ENCODE measurements at regions of chr6 and their contacts with region 1.

Region 1: DNA sequence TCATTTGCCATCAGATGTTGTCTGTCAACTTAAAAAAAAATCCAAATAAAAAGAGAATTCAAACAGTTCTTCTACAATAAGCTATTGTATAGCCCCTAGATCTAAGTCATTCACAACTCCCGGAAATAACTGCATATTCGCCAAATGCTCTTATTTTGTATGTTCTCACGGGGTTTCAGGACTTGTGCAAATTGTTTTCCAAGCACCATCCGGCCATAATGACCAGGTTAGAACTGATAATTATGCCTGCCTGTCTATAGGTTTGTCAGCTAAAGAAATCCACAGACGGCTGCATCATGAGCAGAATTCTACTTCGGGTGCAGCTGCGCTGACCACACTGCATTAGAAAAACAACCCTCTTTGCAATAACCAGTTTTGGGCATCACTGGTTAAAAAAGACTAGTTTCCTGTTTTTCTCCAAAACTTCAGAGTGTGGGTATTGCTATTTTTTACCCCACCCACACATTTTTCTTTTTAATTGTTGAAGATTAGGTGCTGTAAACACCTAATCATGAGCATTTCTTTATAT is 87.7 kb downstream of the HIVEP2 start:
- DNase-seq: peak in 1 of 2 donors; percentile 64
- ATAC-seq: peak; percentile 22 to 40 (median 29)
- H3K4me3 ChIP-seq: peak overlapping the region; percentile 24
- H3K4me3 Mint-ChIP-seq: peak overlapping the region; percentile 89
- H3K27ac ChIP-seq: peak overlapping the region; percentile 65
- H3K27ac Mint-ChIP-seq: peak overlapping the region; percentile 78 to 92
- H3K4me1 ChIP-seq: peaks cover 39% of the 10 kb centered on the region
- H3K4me1 Mint-ChIP-seq: peaks cover 39 to 43% of the 10 kb centered on the region in 2 donors
- H3K27me3 ChIP-seq: no peaks in the 10 kb centered on the region
- H3K27me3 Mint-ChIP-seq: no peaks in the 10 kb centered on the region
- CTCF ChIP-seq: no peak

Region 2: GRCh38 chr6:142808378-142809061 is 48.8 kb before region 1 on chr6:
- intact Hi-C with region 1: no loop called
- DNase-seq: no peak
- ATAC-seq: no peak
- H3K4me3 ChIP-seq: no peak overlapping the region
- H3K4me3 Mint-ChIP-seq: no peak overlapping the region
- H3K27ac ChIP-seq: no peak overlapping the region
- H3K27ac Mint-ChIP-seq: no peak overlapping the region
- H3K4me1 ChIP-seq: no peaks in the 10 kb centered on the region
- H3K4me1 Mint-ChIP-seq: peaks cover 8 to 19% of the 10 kb centered on the region in 2 donors
- H3K27me3 ChIP-seq: no peaks in the 10 kb centered on the region
- H3K27me3 Mint-ChIP-seq: no peaks in the 10 kb centered on the region
- CTCF ChIP-seq: no peak

Region 3: GRCh38 chr6:142819603-142820337 is 37.5 kb before region 1 on chr6:
- intact Hi-C with region 1: loop called (anchors 5 kb)
- DNase-seq: peak in 1 of 2 donors; percentile 80
- ATAC-seq: peak; percentile 82 to 90 (median 83)
- H3K4me3 ChIP-seq: peak overlapping the region; percentile 31
- H3K4me3 Mint-ChIP-seq: peak overlapping the region; percentile 95
- H3K27ac ChIP-seq: peak overlapping the region; percentile 78
- H3K27ac Mint-ChIP-seq: peak overlapping the region; percentile 92 to 97
- H3K4me1 ChIP-seq: peaks cover 14% of the 10 kb centered on the region
- H3K4me1 Mint-ChIP-seq: peaks cover 27 to 52% of the 10 kb centered on the region in 2 donors
- H3K27me3 ChIP-seq: no peaks in the 10 kb centered on the region
- H3K27me3 Mint-ChIP-seq: no peaks in the 10 kb centered on the region
- CTCF ChIP-seq: no peak

Region 4: GRCh38 chr6:142842418-142843261 is 14.7 kb before region 1 on chr6:
- intact Hi-C with region 1: loop called (anchors 2 kb)
- DNase-seq: peak in 1 of 2 donors; percentile 84
- ATAC-seq: peak; percentile 60 to 79 (median 69)
- H3K4me3 ChIP-seq: peak overlapping the region; percentile 17
- H3K4me3 Mint-ChIP-seq: peak overlapping the region; percentile 84
- H3K27ac ChIP-seq: peak overlapping the region; percentile 63
- H3K27ac Mint-ChIP-seq: peak overlapping the region; percentile 93
- H3K4me1 ChIP-seq: peaks cover 21% of the 10 kb centered on the region
- H3K4me1 Mint-ChIP-seq: peaks cover 44 to 50% of the 10 kb centered on the region in 2 donors
- H3K27me3 ChIP-seq: no peaks in the 10 kb centered on the region
- H3K27me3 Mint-ChIP-seq: no peaks in the 10 kb centered on the region
- CTCF ChIP-seq: no peak

Region 5: DNA sequence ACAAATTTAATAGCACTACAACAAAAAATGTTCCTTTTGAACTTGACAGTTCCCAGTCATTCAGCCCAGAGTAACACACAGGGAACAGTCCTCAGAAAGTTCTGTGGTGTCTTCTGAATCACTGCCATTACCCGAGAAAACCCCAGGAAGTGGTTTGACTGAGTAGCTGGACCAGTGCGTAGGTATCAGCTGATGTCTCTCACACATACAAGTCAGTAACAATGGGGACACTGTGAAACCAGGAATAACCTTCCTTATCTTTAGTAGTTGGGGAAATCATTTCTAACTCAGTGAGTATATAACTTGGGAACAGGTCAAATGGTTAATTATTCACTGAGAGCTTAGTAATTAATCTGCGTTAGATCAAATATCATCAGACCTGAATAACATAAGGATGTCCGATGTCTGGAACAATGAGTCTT is 14.6 kb after region 1 on chr6:
- intact Hi-C with region 1: loop called (anchors 2 kb)
- DNase-seq: peak; percentile 34 to 87
- ATAC-seq: peak; percentile 74 to 93 (median 84)
- H3K4me3 ChIP-seq: no peak overlapping the region
- H3K4me3 Mint-ChIP-seq: peak overlapping the region; percentile 35
- H3K27ac ChIP-seq: peak overlapping the region; percentile 28
- H3K27ac Mint-ChIP-seq: peak overlapping the region; percentile 74 to 83
- H3K4me1 ChIP-seq: peaks cover 7% of the 10 kb centered on the region
- H3K4me1 Mint-ChIP-seq: peaks cover 55 to 57% of the 10 kb centered on the region in 2 donors
- H3K27me3 ChIP-seq: no peaks in the 10 kb centered on the region
- H3K27me3 Mint-ChIP-seq: no peaks in the 10 kb centered on the region
- CTCF ChIP-seq: no peak

Region 6: DNA sequence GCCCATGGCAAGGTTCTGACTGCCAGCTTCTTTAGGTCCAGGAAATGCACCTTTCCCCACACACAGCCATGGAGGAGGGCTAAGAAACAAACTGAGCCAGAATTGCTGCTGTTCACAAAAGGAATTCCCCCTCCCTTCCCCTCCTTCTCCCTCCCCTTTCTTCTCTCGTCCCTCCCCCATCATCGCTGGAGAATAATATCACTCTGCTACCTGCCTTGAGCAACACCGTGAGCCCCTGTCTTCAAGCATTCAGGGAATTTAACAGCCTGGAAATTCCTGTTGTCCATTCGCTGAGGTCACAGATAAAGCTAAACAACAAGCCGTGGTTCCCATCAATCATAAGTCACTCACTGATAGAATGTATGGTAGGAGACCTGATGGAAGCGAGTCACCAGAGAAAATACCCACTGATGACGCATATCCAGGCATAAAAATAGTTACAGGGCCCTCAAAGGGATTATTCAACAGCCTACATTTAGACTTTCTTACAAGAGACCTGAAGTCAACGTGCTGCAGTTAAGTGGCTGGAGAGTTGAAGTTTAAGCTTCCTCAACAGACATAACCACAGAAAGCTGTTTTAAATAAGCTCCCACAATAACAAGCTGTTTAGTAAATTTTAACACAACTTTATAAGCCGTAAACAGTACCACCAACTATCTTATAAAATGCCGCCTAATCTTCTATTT is 28.0 kb after region 1 on chr6:
- intact Hi-C with region 1: loop called (anchors 2 kb)
- DNase-seq: peak; percentile 30 to 91
- ATAC-seq: peak; percentile 83 to 89 (median 84)
- H3K4me3 ChIP-seq: peak overlapping the region; percentile 5
- H3K4me3 Mint-ChIP-seq: peak overlapping the region; percentile 65
- H3K27ac ChIP-seq: peak overlapping the region; percentile 64
- H3K27ac Mint-ChIP-seq: peak overlapping the region; percentile 84 to 92
- H3K4me1 ChIP-seq: peaks cover 7% of the 10 kb centered on the region
- H3K4me1 Mint-ChIP-seq: peaks cover 37 to 48% of the 10 kb centered on the region in 2 donors
- H3K27me3 ChIP-seq: no peaks in the 10 kb centered on the region
- H3K27me3 Mint-ChIP-seq: no peaks in the 10 kb centered on the region
- CTCF ChIP-seq: no peak

Region 7: GRCh38 chr6:142902636-142903053 is 45.3 kb after region 1 on chr6:
- intact Hi-C with region 1: loop called (anchors 5 kb)
- DNase-seq: peak; percentile 80 to 93
- ATAC-seq: peak; percentile 89 to 98 (median 90)
- H3K4me3 ChIP-seq: no peak overlapping the region
- H3K4me3 Mint-ChIP-seq: peak overlapping the region; percentile 86
- H3K27ac ChIP-seq: peak overlapping the region; percentile 87
- H3K27ac Mint-ChIP-seq: peak overlapping the region; percentile 93 to 98
- H3K4me1 ChIP-seq: peaks cover 14% of the 10 kb centered on the region
- H3K4me1 Mint-ChIP-seq: peaks cover 40 to 43% of the 10 kb centered on the region in 2 donors
- H3K27me3 ChIP-seq: no peaks in the 10 kb centered on the region
- H3K27me3 Mint-ChIP-seq: no peaks in the 10 kb centered on the region
- CTCF ChIP-seq: no peak